Prostate gland (tissue), 2 donors: ENCODE measurements at regions of chr6 and their contacts with region 1.

Region 1: DNA sequence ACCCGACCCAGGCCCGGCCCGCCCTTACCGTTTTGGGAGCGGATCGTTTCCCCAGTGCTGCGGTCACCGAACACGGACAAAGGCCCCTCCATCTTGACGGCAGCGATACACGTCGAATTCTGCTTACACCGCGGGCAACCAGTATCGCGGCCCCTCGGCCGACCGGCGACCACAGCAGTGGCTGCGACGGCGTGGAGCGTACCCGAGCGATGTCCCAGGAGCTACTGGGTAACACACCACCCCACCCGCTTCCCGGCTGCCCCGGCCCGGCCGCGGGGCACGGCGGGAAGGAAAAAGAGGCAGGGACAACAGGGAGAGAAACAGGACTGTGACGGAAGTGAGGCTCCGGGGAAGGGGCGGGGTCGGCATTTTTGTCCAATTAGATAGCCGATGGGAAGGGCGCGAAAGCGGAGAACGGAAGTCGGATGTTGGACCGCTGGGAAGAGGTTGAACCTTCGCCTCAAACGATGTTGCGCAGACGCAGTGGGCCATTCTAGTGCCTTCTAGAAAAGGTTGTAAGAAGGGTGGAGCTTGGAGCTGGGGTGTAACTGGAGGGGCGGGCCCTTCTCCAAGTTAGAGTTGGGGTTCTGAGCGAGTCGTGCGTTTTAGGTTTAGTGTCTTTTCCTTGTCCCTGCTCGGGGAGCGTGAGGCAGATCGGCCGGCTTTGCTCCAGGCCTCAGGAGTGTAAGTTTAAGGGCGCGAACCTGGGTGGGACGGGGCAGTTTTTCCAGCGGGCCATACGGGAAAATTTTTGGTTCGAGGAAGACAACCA is at the start of gene TCP1:
- DNase-seq: peak; percentile 100
- H3K4me3 ChIP-seq: peak within 1 kb of the TSS; percentile 92 to 97
- H3K27ac ChIP-seq: peak within 1 kb of the TSS; percentile 99
- H3K4me1 ChIP-seq: peaks cover 6% of the 10 kb centered on the region
- H3K27me3 ChIP-seq: no peaks in the 10 kb centered on the region
- CTCF ChIP-seq: peak in 1 of 4 experiments; percentile 6
- POLR2A ChIP-seq: peak; percentile 98
- total RNA-seq, gene TCP1: 145 to 187 TPM

Region 2: GRCh38 chr6:159529934-159530333 is 259.6 kb before region 1 on chr6:
- intact Hi-C with region 1: no loop called
- DNase-seq: no peak
- H3K4me3 ChIP-seq: no peak overlapping the region
- H3K27ac ChIP-seq: no peak overlapping the region
- H3K4me1 ChIP-seq: no peaks in the 10 kb centered on the region
- H3K27me3 ChIP-seq: no peaks in the 10 kb centered on the region
- CTCF ChIP-seq: no peak
- POLR2A ChIP-seq: no peak

Region 3: DNA sequence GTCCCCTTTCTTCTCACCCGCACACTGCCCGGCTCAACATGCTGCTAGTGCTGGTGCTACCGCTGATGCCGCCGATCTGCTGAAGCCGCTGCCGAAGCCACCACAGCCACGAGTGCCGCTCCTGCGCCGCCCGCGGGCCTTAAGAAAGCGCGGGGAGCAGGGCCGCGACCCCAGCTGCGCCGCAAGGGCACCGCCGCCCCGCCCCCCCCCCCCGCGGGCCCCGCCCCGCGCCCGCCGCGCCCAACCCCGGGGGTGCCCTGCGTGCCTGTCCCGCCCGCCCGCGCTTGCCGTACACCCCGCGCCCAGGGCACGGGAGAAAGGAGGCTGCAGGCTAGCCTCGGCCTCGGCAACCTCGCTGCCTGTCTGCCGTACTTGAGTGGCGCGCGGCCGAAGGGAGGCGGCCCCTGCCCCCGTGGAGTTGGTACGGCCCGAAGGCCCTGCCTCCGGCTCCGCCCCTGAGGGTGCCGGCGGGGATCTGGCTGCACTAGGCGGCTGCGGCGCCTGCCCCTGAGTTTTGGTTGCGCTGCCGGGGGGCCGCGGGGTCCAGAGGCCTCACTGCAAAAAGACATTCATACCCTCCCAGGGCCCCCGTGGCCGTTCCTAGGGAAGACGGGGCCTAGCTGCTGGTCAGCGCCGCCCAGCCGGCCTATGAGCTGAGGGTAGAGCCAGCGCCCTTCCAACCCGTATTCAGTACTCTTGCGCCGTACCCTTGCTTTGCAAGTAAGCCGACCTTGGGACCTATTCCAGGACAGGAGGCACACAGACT is 96.3 kb before region 1 on chr6 and contains the start of gene SOD2:
- intact Hi-C with region 1: loop called (anchors 2 kb)
- DNase-seq: peak; percentile 76
- H3K4me3 ChIP-seq: peak within 1 kb of the TSS; percentile 77 to 83
- H3K27ac ChIP-seq: peak within 1 kb of the TSS; percentile 96
- H3K4me1 ChIP-seq: peaks cover 14% of the 10 kb centered on the region
- H3K27me3 ChIP-seq: no peaks in the 10 kb centered on the region
- CTCF ChIP-seq: no peak
- POLR2A ChIP-seq: peak; percentile 90
- total RNA-seq, gene SOD2: 196 to 285 TPM

Region 4: DNA sequence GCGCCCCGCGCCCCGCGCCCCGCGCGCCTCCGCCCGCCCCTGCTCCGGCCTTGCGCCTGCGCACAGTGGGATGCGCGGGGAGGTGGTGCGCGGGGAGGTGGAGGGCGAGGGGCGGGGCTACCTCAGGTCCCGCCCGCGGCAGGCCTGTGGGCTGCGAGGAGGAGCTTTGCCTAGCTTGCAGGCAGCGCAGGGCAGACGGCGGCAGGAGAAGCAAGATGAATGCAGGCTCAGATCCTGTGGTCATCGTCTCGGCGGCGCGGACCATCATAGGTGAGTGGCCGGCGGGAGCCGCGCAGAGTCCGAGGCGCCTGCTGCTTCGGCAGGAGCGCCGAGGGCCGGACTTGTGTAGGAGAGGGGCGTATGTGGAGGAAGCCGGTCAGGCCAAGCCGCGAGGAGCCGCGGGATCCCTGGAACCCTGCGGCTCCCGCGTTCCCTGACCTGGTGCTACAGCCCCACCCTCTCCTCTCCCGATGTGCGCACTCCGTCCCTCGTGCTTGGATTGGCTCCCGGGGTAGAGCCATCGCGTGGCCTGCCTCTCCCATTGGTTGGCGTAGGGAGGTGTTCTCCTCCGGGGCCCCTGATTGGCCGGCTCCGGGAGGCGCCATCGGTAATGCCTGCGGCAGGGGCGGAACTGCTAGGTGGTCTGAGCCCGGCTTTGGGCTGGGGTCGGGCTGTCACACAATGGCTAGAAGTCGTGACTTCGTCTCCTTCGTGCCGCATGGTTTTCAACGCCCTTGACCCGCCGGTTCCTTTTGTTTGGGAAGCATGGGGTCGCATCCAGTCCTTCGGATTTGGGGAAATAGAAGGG is 27.5 kb before region 1 on chr6 and contains the start of gene ACAT2:
- intact Hi-C with region 1: loop called (anchors 1 kb)
- DNase-seq: peak; percentile 97
- H3K4me3 ChIP-seq: peak within 1 kb of the TSS; percentile 66 to 88
- H3K27ac ChIP-seq: peak within 1 kb of the TSS; percentile 98 to 99
- H3K4me1 ChIP-seq: no peaks in the 10 kb centered on the region
- H3K27me3 ChIP-seq: no peaks in the 10 kb centered on the region
- CTCF ChIP-seq: peak in 2 of 4 experiments; percentile 29 to 35
- POLR2A ChIP-seq: peak; percentile 73
- total RNA-seq, gene ACAT2: 10.2 to 22.6 TPM